ENCODE measurements at regions of chr13 and their contacts with region 1.

Region 1: DNA sequence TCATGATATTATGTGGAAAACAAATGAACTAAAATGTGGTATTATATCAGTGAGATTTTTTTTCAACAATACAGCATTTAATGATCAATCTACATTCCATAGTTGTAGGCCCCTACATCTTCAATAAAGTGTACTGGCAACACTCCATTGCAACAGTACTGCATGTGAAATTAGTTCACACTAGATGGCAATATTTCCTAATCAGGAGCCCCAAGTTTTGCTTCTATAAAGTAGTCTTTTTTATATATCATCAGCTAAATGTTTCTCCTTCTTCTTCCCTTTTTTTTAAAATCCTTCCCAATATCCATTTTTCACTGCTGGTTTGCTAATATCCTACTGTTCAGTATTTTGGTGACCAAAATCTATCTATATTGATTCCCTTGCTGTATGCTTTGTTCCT is 528.3 kb upstream of the ATXN8OS start:
- DNase-seq: no peak
- ATAC-seq: peak; percentile 75
- H3K4me3 ChIP-seq: no peak overlapping the region
- H3K27ac ChIP-seq: no peak overlapping the region
- H3K4me1 ChIP-seq: no peaks in the 10 kb centered on the region
- H3K27me3 ChIP-seq: no peaks in the 10 kb centered on the region
- CTCF ChIP-seq: peak in 2 of 3 experiments; percentile 7 to 46; a peak in 2 of 6 replicates
- EP300 ChIP-seq: no peak
- POLR2A ChIP-seq: no peak
- RAD21 ChIP-seq: peak; percentile 64

Region 2: DNA sequence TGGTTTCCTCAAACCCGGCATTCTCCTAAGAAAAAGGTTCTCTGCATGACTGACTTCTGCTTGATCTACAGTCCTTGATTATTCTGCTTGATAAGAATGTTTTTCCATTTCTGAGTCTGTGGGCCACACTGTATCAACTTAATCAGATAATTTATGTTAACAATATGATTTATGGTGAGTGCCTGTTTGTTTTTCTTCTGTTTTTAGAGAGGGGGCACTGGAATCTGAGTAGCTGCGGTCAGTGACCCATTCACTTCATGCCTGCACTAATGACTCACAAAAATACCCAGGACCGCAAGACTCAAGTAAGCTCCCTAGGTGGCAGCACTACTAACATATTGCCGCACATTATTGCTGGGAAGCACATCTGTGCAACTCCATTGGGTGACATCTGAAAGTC is 14.0 kb before region 1 on chr13:
- CTCF ChIA-PET with region 1: interaction called, 21 read pairs
- POLR2A ChIA-PET with region 1: no interaction called
- RAD21 ChIA-PET with region 1: interaction called, 3 read pairs
- SMC1A ChIA-PET with region 1: interaction called, 36 read pairs
- in situ Hi-C with region 1: no loop called
- intact Hi-C with region 1: no loop called
- DNase-seq: peak; percentile 12
- ATAC-seq: peak; percentile 95
- H3K4me3 ChIP-seq: no peak overlapping the region
- H3K27ac ChIP-seq: no peak overlapping the region
- H3K4me1 ChIP-seq: no peaks in the 10 kb centered on the region
- H3K27me3 ChIP-seq: no peaks in the 10 kb centered on the region
- CTCF ChIP-seq: peak; percentile 45 to 53 (median 46); a peak in 5 of 6 replicates
- EP300 ChIP-seq: no peak; a peak in 1 of 4 replicates
- POLR2A ChIP-seq: no peak
- RAD21 ChIP-seq: peak; percentile 47; the same call in 1 of the 2 replicates

Measured in GM12878 (cell line).